Activated CD4-positive, alpha-beta T cell treated with anti-CD3 and anti-CD28 coated beads for 36 hours (primary cell): ENCODE measurements at regions of chr4 and their contacts with region 1.

Region 1: DNA sequence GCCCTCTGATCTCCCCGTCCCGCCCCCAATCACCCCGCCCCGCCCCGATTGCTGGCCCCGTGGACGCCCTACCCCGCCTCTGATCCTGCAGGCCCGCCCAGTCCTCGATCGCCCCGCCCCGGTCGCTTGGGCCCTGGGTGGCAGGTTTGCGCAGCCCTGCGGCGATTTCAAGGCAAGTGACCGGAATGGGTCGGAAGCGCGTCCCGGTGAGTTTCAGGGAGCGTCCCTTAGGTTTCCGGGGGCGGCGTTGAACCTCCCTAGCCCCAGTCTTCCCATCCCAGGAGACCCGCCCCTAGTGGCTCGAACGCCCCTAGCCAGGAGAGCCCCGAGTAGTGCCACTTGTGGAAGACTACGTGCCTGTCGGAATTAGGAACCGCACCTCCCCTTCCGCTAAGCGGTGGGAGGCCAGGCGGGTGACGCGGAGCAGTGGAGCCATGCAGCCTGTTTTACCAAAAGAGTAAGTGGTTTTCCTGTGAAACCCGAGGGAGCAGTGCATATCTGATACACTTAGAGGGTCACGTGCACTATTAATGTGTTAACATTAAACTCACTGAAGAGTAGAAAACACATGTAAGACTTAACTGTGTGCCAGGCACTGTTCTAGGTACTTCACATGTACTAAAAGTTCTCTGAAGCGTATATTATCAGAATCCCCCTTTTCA is 354 bp upstream of the TEC start:
- DNase-seq: peak; percentile 97
- ATAC-seq: peak; percentile 95
- H3K4me3 Mint-ChIP-seq: peak overlapping the region; percentile 89
- H3K27ac Mint-ChIP-seq: peak overlapping the region; percentile 93
- H3K4me1 Mint-ChIP-seq: peaks cover 17% of the 10 kb centered on the region
- H3K27me3 Mint-ChIP-seq: no peaks in the 10 kb centered on the region

Region 2: DNA sequence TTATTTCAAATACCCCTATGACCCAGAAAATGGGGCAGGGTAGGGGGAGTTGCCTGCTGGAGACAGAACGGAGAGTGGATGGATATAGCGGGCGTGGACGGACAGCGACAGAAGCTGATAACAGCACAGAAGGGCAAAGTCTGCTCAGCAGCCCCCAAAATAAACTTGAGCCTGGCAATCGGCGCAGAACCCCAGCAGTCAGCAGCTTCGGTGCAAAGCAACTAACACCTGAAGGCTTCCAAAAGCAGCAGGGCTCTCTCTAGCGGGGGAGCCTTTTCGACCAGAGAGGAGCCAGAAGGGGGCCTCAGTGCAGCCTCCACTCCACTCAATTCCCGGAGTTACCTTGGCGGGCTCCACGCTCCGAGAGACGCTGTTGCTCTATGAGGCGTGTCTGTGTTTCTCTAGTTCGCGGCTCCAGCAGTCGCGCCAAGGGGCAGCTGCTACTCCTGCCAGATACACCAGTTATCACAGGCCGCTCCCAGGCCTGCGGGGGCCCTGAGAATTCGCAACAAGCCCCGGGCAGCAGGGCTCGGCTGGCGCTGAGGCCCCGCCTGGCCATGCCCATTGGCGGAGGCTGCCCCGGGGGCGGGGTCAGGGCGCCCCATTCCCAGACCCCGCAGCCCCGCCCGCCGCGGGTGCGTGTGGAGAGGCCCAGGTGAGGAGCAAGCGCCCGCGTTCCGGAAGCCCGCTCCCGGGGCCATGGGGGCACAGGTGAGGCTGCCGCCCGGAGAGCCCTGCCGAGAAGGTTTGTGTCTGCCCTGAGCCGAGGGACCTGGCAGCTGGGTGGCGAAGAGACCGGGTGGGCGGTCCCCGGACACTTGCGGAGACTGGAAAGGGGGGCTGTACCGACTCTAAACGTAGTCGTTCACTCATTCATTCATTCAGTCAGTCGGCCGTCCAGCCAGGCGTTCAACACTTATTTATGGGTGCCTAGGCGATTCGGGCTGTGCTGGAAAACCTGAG is 253.6 kb before region 1 on chr4 and contains the starts of genes CNGA1 and NIPAL1:
- CTCF ChIA-PET with region 1: no interaction called
- POLR2A ChIA-PET with region 1: no interaction called
- intact Hi-C with region 1: loop called in 1 of 2 experiments (anchors 2 kb)
- DNase-seq: peak; percentile 80
- ATAC-seq: peak; percentile 86
- H3K4me3 Mint-ChIP-seq: peak within 1 kb of the TSS; percentile 76
- H3K27ac Mint-ChIP-seq: peak within 1 kb of the TSS; percentile 66
- H3K4me1 Mint-ChIP-seq: peaks cover 29% of the 10 kb centered on the region
- H3K27me3 Mint-ChIP-seq: peaks cover 16% of the 10 kb centered on the region
- total RNA-seq, gene CNGA1: 0.16 to 0.30 TPM
- total RNA-seq, gene NIPAL1: 1.6 to 1.8 TPM

Region 3: GRCh38 chr4:48167538-48168263 is 102.3 kb before region 1 on chr4:
- CTCF ChIA-PET with region 1: no interaction called
- POLR2A ChIA-PET with region 1: no interaction called
- intact Hi-C with region 1: loop called in 1 of 2 experiments (anchors 2 kb)
- DNase-seq: no peak
- ATAC-seq: peak; percentile 86
- H3K4me3 Mint-ChIP-seq: no peak overlapping the region
- H3K27ac Mint-ChIP-seq: no peak overlapping the region
- H3K4me1 Mint-ChIP-seq: peaks cover 13% of the 10 kb centered on the region
- H3K27me3 Mint-ChIP-seq: no peaks in the 10 kb centered on the region

Region 4: GRCh38 chr4:48830706-48831531 is 560.9 kb after region 1 on chr4 and contains the start of gene OCIAD1:
- CTCF ChIA-PET with region 1: no interaction called
- POLR2A ChIA-PET with region 1: no interaction called
- intact Hi-C with region 1: loop called in 1 of 2 experiments (anchors 1 kb)
- DNase-seq: peak; percentile 96
- ATAC-seq: peak; percentile 99
- H3K4me3 Mint-ChIP-seq: peak within 1 kb of the TSS; percentile 100
- H3K27ac Mint-ChIP-seq: peak within 1 kb of the TSS; percentile 100
- H3K4me1 Mint-ChIP-seq: peaks cover 23% of the 10 kb centered on the region
- H3K27me3 Mint-ChIP-seq: no peaks in the 10 kb centered on the region
- total RNA-seq, gene OCIAD1: 113 to 162 TPM